CD4-positive, alpha-beta T cell (primary cell): ENCODE measurements at regions of chr6 and their contacts with region 1.

Region 1: DNA sequence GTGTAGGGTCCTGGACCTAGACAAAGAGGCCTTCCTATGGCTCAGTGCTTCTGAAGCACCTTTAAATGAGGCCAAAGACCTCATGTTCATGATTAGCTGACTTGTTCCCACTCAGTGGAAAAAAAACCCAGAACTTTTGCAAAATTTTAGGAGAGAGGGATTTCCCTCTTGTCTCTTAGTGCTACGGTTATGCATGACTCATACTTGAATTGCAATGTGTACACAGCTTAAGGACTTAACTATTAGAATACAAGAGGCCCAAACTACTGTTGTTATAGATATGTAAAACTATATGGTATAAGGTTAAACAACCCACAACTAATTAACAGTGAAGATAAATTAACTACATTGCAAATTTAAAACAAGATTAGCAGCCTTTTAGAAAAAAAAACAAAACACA is 32.3 kb upstream of the HLA-A start:
- DNase-seq: no peak
- ATAC-seq: no peak
- H3K4me3 ChIP-seq: no peak overlapping the region
- H3K4me3 Mint-ChIP-seq: no peak overlapping the region
- H3K27ac ChIP-seq: no peak overlapping the region
- H3K27ac Mint-ChIP-seq: no peak overlapping the region
- H3K4me1 ChIP-seq: peaks cover 4% of the 10 kb centered on the region
- H3K4me1 Mint-ChIP-seq: no peaks in the 10 kb centered on the region
- H3K27me3 ChIP-seq: no peaks in the 10 kb centered on the region
- H3K27me3 Mint-ChIP-seq: peaks cover 29% of the 10 kb centered on the region
- CTCF ChIP-seq: no peak

Region 2: DNA sequence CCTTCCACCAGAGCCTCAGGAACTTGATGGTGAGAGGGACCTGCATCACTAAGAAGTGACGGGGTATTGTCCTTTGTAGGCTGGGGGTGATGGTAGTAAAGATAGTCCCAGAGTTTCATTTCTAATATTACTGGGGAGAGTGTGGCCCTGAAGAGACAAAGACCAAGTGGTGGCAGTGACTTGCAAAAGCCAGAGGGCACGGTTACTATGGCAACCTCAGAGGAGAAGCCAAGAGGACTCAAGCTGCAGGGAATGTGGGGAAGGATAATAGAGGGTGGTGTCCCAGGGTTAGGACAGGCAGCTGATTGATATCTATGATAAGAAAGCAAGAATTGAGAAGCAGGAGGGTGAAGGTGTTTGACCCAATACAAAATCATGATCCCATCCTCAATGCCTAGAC is 39.9 kb before region 1 on chr6:
- CTCF ChIA-PET with region 1: no interaction called
- POLR2A ChIA-PET with region 1: no interaction called
- intact Hi-C with region 1: loop called in 1 of 2 experiments (anchors 5 kb)
- DNase-seq: peak in 1 of 14 experiments; percentile 6
- ATAC-seq: no peak
- H3K4me3 ChIP-seq: no peak overlapping the region
- H3K4me3 Mint-ChIP-seq: no peak overlapping the region
- H3K27ac ChIP-seq: no peak overlapping the region
- H3K27ac Mint-ChIP-seq: no peak overlapping the region
- H3K4me1 ChIP-seq: no peaks in the 10 kb centered on the region
- H3K4me1 Mint-ChIP-seq: no peaks in the 10 kb centered on the region
- H3K27me3 ChIP-seq: peaks cover 3 to 6% of the 10 kb centered on the region in 2 experiments
- H3K27me3 Mint-ChIP-seq: peaks cover 23% of the 10 kb centered on the region
- CTCF ChIP-seq: no peak

Region 3: GRCh38 chr6:30066577-30067459 is 156.8 kb after region 1 on chr6 and contains the start of gene PPP1R11:
- CTCF ChIA-PET with region 1: no interaction called
- POLR2A ChIA-PET with region 1: no interaction called
- intact Hi-C with region 1: no loop called
- DNase-seq: peak; percentile 95 to 100 (median 98)
- ATAC-seq: peak; percentile 95
- H3K4me3 ChIP-seq: peak within 1 kb of the TSS; percentile 79
- H3K4me3 Mint-ChIP-seq: peak within 1 kb of the TSS; percentile 94
- H3K27ac ChIP-seq: peak within 1 kb of the TSS; percentile 83 to 96
- H3K27ac Mint-ChIP-seq: peak within 1 kb of the TSS; percentile 96
- H3K4me1 ChIP-seq: peaks cover 42% of the 10 kb centered on the region
- H3K4me1 Mint-ChIP-seq: peaks cover 69% of the 10 kb centered on the region
- H3K27me3 ChIP-seq: peaks cover 9% of the 10 kb centered on the region in 2 experiments
- H3K27me3 Mint-ChIP-seq: peaks cover 14% of the 10 kb centered on the region
- CTCF ChIP-seq: no peak
- total RNA-seq, gene PPP1R11: 28.3 to 28.6 TPM

Region 4: DNA sequence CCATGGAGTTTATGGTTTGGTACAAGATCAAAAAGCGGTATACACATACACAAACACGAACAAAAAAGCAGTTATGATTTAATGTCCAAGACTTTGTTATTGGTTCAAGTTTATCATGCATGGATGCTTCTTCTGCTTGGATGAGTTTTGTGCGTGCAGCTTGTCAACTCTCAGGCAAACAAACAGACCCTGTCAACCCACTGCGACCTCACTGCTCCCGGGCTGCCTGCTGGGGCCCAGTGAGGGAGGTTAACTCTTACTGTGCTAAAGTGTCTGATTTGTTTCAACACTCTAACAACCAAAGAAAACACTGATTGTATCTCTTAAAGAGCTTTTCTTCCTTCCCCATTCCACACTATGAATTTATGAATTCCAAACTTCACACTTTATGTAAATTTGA is 947.6 kb after region 1 on chr6:
- CTCF ChIA-PET with region 1: no interaction called
- POLR2A ChIA-PET with region 1: no interaction called
- intact Hi-C with region 1: no loop called
- DNase-seq: no peak
- ATAC-seq: no peak
- H3K4me3 ChIP-seq: no peak overlapping the region
- H3K4me3 Mint-ChIP-seq: no peak overlapping the region
- H3K27ac ChIP-seq: no peak overlapping the region
- H3K27ac Mint-ChIP-seq: no peak overlapping the region
- H3K4me1 ChIP-seq: no peaks in the 10 kb centered on the region
- H3K4me1 Mint-ChIP-seq: no peaks in the 10 kb centered on the region
- H3K27me3 ChIP-seq: peaks cover 0 to 3% of the 10 kb centered on the region in 2 experiments
- H3K27me3 Mint-ChIP-seq: no peaks in the 10 kb centered on the region
- CTCF ChIP-seq: no peak